Activated T-helper 1 cell treated with anti-CD3 and anti-CD28 coated beads, Interleukin-12 subunit alpha, Interleukin-12 subunit beta, Interleukin-2, Interleukin-4 antibody, amounts not matched to agents 30 ng/mL and 10 ng/mL and 1 ng/mL, durations not matched to agents 14 hours and 24 hours and 36 hours (primary cell): ENCODE measurements at regions of chr22 and their contacts with region 1.

Region 1: DNA sequence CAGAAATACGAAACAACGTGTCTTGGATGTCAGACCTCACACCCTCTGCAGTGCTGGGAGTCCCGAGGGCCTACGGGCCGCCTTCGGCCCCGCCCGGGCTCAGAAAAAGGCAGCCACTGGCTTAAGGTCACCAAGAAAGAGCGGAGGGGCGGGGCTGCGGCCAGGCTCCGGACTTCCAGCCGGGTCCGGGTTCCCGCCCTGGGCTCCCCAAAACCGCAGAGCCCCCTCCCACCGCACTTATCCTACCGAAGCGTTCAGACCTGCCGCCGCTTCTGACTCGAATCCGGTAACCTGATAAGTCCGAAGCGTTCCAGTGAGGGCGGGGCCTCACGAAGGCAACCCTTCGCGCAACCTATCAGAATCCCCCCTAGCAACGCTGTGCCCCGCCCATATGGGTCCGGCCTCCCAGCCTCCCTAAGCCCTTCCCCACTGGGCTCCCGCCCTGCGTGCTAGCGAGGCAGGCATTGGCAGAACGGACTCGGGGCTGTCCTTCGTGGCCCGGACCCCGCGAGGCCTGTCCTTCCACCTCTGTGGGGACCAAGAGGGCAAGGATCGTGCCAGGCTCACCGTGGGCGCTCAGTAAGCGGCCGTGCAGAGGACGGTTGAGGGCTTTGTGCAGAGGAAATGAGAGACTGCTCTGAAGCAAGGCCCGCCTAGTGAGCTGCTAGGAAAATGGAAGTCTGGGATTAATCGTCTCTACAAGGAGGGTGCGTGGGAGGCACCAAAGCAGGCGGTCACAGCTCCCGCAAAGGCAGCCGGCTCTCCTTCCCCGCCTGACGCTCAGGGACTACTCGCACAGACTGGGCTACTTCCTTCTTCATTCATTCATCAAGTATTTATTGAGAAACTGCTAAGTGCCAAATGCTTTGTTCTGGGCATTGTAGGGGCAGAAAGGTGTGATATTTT is at the start of gene NAGA:
- DNase-seq: peak; percentile 91
- H3K4me3 Mint-ChIP-seq: peak within 1 kb of the TSS; percentile 92
- H3K27ac Mint-ChIP-seq: peak within 1 kb of the TSS; percentile 94
- H3K4me1 Mint-ChIP-seq: peaks cover 53% of the 10 kb centered on the region
- H3K27me3 Mint-ChIP-seq: peaks cover 2% of the 10 kb centered on the region
- total RNA-seq, gene NAGA: 30.5 and 30.9 TPM in 2 replicates

Region 2: DNA sequence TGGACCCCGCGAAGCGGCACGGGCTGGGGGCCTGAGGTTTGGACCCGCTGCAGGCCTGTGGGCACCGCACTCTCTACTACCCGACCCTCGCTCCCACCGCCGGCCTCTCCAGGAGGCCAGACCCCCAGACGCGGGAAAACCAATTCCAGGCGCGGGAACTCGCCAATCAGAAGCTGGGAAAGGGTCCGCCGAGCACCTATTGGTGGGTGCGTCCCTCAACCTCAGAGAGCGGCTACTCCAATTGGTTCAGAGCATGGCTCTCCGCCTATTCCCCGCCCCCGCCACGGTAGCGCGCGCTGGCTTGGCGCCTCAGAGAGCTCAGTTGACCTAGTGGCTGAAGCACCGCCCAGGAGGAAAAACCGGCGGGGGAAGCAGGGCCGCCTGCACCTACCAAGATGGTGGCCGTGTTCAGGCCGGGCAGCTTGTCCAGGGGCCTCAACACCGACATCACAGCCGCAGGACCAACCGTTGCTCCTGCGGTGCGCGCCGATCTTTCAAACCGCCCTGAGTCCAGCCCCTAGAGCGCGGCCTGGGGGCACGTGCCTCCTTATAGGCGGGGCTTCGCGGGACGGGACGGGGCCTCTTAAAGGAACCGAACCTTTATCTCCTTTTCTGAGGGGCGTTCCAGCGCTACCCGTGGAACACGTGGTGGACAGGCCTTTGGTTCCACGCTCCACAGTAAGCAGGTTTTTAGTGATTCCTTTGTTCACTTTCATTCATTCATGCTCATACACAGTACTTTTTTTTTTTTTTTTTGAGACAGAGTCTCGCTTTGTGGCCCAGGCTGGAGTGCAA is 123.9 kb before region 1 on chr22 and contains the start of gene CENPM:
- intact Hi-C with region 1: loop called (anchors 1 kb)
- DNase-seq: peak; percentile 93
- H3K4me3 Mint-ChIP-seq: peak within 1 kb of the TSS; percentile 92
- H3K27ac Mint-ChIP-seq: peak within 1 kb of the TSS; percentile 93
- H3K4me1 Mint-ChIP-seq: peaks cover 47% of the 10 kb centered on the region
- H3K27me3 Mint-ChIP-seq: no peaks in the 10 kb centered on the region
- total RNA-seq, gene CENPM: 82.0 and 84.6 TPM in 2 replicates

Region 3: GRCh38 chr22:41976401-41976901 is 94.3 kb before region 1 on chr22:
- intact Hi-C with region 1: loop called (anchors 2 kb)
- DNase-seq: peak; percentile 62
- H3K4me3 Mint-ChIP-seq: peak overlapping the region; percentile 70
- H3K27ac Mint-ChIP-seq: peak overlapping the region; percentile 3
- H3K4me1 Mint-ChIP-seq: peaks cover 21% of the 10 kb centered on the region
- H3K27me3 Mint-ChIP-seq: peaks cover 32% of the 10 kb centered on the region

Region 4: DNA sequence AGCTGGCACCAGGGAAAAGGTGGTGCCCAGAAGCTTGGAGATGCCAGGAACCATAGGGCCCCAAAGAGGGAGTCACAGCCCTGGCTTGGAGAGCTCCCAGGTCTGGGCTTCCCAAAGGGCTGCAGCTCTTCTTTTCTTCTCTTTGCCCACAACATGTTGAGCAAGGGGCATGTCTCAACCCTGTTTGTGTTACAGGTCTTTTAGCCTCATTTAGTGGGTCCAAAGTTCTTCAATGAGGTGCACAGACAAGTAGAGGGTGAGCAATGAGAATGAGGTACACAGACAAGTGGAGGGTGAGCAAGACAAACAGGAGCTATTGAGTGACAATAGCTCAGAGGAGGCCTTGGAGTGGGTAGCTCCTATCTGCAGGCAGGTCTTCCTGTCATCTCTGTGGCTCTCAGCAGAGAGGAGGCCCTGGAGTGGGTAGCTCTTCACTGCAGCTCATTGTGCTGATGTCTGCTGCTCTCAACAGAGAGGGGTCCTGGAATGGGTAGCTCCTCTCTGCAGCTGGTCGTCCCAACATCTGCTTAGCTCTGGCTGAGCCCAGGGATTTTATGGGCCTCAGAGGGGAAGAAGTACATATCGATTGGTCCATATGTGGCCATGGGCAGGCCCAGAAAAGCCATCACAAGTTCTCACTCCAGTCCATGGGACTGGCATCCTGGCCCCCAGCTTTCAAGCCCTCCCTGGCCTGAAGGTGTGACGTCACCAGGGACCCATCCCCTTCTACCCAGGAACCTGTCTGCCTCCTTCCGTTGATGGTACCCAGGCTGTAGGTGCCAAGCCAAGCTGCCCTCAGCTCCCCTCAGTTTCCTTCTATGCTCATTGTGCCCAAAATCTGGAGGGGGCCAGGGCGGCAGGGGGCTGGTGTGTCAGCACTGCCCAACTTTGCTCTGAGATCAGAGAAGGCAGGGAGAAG is 37.2 kb before region 1 on chr22:
- intact Hi-C with region 1: loop called (anchors 1 kb)
- DNase-seq: no peak
- H3K4me3 Mint-ChIP-seq: no peak overlapping the region
- H3K27ac Mint-ChIP-seq: no peak overlapping the region
- H3K4me1 Mint-ChIP-seq: peaks cover 40% of the 10 kb centered on the region
- H3K27me3 Mint-ChIP-seq: peaks cover 4% of the 10 kb centered on the region